Aorta (tissue), 5 donors: ENCODE measurements at regions of chr5 and their contacts with region 1.

Region 1: GRCh38 chr5:178732281-178732680 is 1.8 kb upstream of the ZNF354A start:
- DNase-seq: no peak
- ATAC-seq: no peak
- H3K4me3 ChIP-seq: no peak overlapping the region
- H3K27ac ChIP-seq: no peak overlapping the region
- H3K4me1 ChIP-seq: no peaks in the 10 kb centered on the region
- H3K27me3 ChIP-seq: no peaks in the 10 kb centered on the region

Region 2: GRCh38 chr5:178626484-178627258 is 105.6 kb before region 1 on chr5 and contains the start of gene CLK4:
- intact Hi-C with region 1: loop called in 1 of 2 experiments (anchors 2 kb)
- DNase-seq: peak; percentile 98 to 99
- ATAC-seq: peak; percentile 99
- H3K4me3 ChIP-seq: peak within 1 kb of the TSS; percentile 69 to 97
- H3K27ac ChIP-seq: peak within 1 kb of the TSS; percentile 79 to 98
- H3K4me1 ChIP-seq: peaks cover 0 to 7% of the 10 kb centered on the region in 2 donors
- H3K27me3 ChIP-seq: no peaks in the 10 kb centered on the region
- total RNA-seq, gene CLK4: 26.3 to 39.5 TPM

Region 3: GRCh38 chr5:178766936-178767912 is 34.9 kb after region 1 on chr5:
- intact Hi-C with region 1: no loop called
- DNase-seq: peak in 1 of 2 donors; percentile 53
- ATAC-seq: no peak
- H3K4me3 ChIP-seq: no peak overlapping the region
- H3K27ac ChIP-seq: no peak overlapping the region
- H3K4me1 ChIP-seq: no peaks in the 10 kb centered on the region
- H3K27me3 ChIP-seq: no peaks in the 10 kb centered on the region

Region 4: DNA sequence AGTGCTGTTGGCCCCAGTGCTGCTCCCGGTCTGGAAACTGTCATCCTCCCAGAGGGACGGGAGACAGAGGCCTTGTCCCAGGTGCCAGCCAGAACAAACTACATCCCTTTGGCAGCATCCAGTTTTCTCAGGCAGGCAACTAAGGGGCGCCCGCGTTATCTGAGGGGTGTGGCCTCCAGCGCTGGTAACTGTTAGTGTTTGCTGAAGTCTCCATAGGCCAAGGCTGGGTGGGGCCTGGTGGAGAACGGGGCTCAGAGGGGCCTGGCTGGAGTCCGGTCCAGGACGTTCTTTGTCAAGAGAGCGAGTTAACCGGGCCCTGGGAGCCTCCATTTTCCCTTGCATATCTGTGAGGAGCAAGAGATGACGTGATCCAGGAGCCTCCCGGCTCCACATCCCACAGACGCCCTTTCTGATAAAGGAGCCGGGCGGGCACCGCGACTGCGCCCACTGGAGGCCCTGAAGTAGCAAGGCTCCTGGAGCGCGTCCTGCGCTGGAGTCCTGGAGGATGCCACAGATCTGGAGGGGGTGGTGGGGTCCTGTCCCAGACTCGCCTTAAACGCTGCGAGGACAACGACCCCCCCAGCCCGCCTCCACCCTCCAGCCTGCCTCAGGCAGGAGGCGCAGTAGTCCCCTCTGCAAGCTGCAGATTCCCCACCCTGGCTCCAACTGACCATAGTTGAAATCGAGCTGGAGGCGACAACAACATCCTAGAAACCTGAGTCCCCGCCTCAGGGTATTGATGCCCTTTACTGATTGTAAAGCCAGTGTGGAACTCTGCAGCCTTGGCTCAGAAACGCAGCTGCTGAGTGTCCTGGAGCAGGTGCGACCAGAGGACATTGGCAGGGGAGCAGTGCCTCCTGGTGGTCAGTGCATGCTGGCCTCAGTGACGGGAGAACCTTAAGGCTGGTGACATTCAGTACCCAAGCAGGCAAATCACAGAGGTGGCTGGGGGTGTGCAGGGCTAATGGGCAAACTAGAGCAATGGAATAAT is 106.7 kb after region 1 on chr5:
- intact Hi-C with region 1: loop called in 1 of 2 experiments (anchors 5 kb)
- DNase-seq: peak; percentile 75 to 84
- ATAC-seq: peak; percentile 56
- H3K4me3 ChIP-seq: no peak overlapping the region
- H3K27ac ChIP-seq: no peak overlapping the region
- H3K4me1 ChIP-seq: no peaks in the 10 kb centered on the region
- H3K27me3 ChIP-seq: no peaks in the 10 kb centered on the region

Region 5: DNA sequence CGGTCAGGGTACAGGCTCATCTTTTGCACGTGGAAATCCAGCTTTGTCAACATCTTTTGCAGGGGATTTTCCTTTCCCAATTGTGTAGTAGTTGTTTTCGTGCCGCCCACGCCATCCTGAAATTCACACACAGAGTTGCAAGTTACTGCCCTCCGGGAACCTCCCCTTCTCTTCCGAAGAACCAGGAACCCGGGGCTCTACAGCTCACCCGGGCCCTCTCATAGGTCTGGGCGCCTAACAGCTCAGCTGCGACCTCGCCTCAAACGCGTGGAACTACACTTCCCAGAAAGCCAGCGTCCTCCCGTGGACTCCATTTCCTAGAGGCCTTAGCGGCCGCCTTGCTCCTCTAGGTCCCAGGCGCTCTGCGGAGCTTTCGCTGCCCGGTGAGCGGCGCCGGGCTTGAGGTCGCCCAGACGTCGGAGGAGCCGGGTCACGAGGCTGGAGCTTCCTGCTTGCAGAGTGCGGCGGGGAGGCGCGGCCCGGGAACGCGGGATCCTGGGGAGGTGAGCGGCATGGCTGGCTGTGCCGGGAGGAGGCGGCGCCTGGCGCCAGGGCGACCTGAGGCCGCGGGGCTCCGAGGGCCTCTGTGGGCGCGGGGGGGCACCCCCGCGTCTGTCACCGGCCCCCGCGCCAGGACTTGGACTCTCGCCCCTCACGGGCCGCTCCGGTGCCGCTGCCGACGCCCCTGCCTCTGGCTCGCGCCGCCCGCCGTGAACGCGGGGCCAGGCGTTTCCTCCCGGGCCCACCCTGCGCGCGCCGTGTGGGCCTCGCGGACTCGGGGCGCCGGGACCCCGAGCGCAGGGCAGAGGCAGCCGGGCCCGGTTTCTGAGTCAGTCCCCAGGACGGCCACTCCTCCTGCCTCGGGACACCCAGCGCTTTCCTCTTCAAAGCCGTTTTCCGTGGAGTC is 127.6 kb after region 1 on chr5 and contains the start of gene ZNF354B:
- intact Hi-C with region 1: loop called (anchors 5 kb)
- DNase-seq: peak; percentile 94 to 95
- ATAC-seq: peak; percentile 95
- H3K4me3 ChIP-seq: peak within 1 kb of the TSS; percentile 42 to 86
- H3K27ac ChIP-seq: peak within 1 kb of the TSS in 1 of 2 donors; percentile 35
- H3K4me1 ChIP-seq: no peaks in the 10 kb centered on the region
- H3K27me3 ChIP-seq: no peaks in the 10 kb centered on the region
- total RNA-seq, gene ZNF354B: 14.4 to 22.9 TPM

Region 6: GRCh38 chr5:179060116-179061008 is 328.1 kb after region 1 on chr5 and contains the start of gene ZNF354C:
- intact Hi-C with region 1: loop called (anchors 5 kb)
- DNase-seq: peak; percentile 92 to 97
- ATAC-seq: peak; percentile 95
- H3K4me3 ChIP-seq: peak within 1 kb of the TSS; percentile 74
- H3K27ac ChIP-seq: peak within 1 kb of the TSS in 1 of 2 donors; percentile 66
- H3K4me1 ChIP-seq: no peaks in the 10 kb centered on the region
- H3K27me3 ChIP-seq: no peaks in the 10 kb centered on the region
- total RNA-seq, gene ZNF354C: 6.3 to 10.2 TPM